Naive thymus-derived CD4-positive, alpha-beta T cell (primary cell): ENCODE measurements at regions of chr15 and their contacts with region 1.

Region 1: GRCh38 chr15:74433592-74434262 is at the start of gene SEMA7A:
- DNase-seq: peak; percentile 32 to 90 (median 53)
- ATAC-seq: peak; percentile 87
- H3K4me3 ChIP-seq: peak within 1 kb of the TSS; percentile 50
- H3K4me3 Mint-ChIP-seq: peak within 1 kb of the TSS; percentile 72 to 88 (median 78)
- H3K27ac ChIP-seq: no peak within 1 kb of the TSS
- H3K27ac Mint-ChIP-seq: peak within 1 kb of the TSS in 4 of 9 donors; percentile 65 to 89 (median 72)
- H3K4me1 ChIP-seq: peaks cover 6 to 35% of the 10 kb centered on the region in 2 donors
- H3K4me1 Mint-ChIP-seq: peaks cover 7 to 57% (median 16%) of the 10 kb centered on the region in 7 donors
- H3K27me3 ChIP-seq: no peaks in the 10 kb centered on the region
- H3K27me3 Mint-ChIP-seq: peaks cover 0 to 3% (median 0%) of the 10 kb centered on the region in 5 donors
- total RNA-seq, gene SEMA7A: 1.6 to 15.7 (median 5.0) TPM

Region 2: GRCh38 chr15:74418575-74419496 is 14.9 kb before region 1 on chr15:
- CTCF ChIA-PET with region 1: no interaction called
- POLR2A ChIA-PET with region 1: no interaction called
- intact Hi-C with region 1: loop called in 1 of 2 experiments (anchors 2 kb)
- DNase-seq: no peak
- ATAC-seq: no peak
- H3K4me3 ChIP-seq: no peak overlapping the region
- H3K4me3 Mint-ChIP-seq: no peak overlapping the region
- H3K27ac ChIP-seq: no peak overlapping the region
- H3K27ac Mint-ChIP-seq: peak overlapping the region in 1 of 9 donors; percentile 29
- H3K4me1 ChIP-seq: peaks cover 0 to 25% of the 10 kb centered on the region in 2 donors
- H3K4me1 Mint-ChIP-seq: peaks cover 0 to 47% (median 4%) of the 10 kb centered on the region in 7 donors
- H3K27me3 ChIP-seq: no peaks in the 10 kb centered on the region
- H3K27me3 Mint-ChIP-seq: no peaks in the 10 kb centered on the region

Region 3: DNA sequence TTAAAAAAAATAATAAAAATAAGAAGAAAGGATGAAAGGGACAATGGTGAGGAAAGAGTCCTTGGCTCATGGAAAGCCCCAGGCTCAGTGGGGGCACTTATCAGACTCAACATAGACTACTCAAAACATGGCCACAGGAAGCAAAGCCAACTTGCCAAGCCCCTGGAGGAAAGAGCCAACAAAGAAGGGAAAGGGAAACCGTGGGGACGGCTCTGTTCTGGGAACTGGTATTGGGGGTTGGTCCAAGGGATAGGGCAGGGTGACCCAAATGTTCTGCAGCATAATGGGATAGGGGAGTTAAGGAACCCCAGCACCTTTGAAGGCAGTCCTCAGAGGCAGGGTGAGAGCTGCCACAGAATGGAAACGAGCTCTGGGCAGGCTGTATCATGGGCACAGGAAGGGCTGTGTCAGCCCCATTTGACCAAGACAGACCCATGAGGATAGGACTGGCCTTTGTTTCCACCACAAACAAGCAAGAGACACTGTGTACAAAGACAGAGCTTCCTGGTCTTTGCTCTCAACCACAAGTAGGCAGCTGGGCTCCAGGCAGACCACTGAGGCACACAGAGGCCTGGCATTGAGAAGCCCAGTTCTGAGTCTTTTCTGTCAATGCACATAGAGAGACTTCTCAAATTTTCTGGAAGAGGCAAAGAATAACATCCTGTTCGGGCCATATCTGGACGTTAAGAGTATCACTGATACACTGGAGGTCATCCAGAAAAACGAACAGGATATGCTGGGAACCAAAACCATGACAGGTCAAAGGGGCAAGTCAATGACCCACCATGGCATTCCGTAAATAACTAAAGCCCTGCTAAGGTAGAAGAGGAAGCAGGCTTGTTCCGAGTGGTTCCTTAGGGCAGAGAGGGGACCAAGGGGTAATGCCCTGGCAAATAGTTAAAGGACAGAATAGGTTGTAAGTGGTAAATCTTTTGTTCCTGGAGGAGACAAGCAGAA is 10.7 kb after region 1 on chr15:
- CTCF ChIA-PET with region 1: no interaction called
- POLR2A ChIA-PET with region 1: no interaction called
- intact Hi-C with region 1: no loop called
- DNase-seq: no peak
- ATAC-seq: no peak
- H3K4me3 ChIP-seq: no peak overlapping the region
- H3K4me3 Mint-ChIP-seq: no peak overlapping the region
- H3K27ac ChIP-seq: no peak overlapping the region
- H3K27ac Mint-ChIP-seq: peak overlapping the region in 1 of 9 donors; percentile 8
- H3K4me1 ChIP-seq: no peaks in the 10 kb centered on the region
- H3K4me1 Mint-ChIP-seq: peaks cover 0 to 8% (median 0%) of the 10 kb centered on the region in 7 donors
- H3K27me3 ChIP-seq: no peaks in the 10 kb centered on the region
- H3K27me3 Mint-ChIP-seq: no peaks in the 10 kb centered on the region

Region 4: DNA sequence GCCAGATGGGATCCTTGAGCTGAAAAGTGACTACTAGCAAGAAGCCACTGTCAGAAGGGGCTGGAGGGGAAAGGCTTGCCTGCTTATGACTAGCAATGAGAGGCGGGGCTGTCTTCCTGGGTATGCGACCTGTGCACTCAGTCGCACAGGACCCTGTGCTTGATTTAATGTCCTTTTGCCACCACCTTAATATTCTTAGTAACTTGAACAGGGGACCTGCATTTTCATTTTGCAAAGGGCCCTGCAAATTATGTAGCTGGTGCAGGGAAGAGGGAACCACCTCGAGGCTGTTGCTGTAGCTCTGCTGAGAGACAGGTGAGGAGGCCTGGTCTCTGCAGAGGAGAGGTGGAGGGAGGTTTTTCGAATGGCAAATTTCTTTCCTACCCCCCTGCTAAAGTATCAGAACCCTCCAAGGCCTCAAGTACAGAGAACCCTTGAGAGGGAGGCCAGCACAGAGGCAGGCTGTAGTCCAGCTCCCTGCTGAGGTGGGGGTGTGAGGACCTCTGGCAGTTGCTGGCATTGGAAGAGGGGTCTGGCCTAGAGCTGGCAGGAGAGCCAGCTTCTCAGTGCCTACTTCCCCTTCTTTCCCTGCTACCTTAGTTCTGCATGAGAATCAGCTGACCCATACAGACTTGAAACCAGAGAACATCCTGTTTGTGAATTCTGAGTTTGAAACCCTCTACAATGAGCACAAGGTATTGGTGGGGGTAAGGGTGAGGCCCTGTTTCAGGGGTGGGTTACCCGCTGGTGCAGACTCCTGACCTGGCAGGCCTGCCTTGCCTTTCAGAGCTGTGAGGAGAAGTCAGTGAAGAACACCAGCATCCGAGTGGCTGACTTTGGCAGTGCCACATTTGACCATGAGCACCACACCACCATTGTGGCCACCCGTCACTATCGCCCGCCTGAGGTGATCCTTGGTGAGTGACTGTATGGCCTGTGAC is 193.3 kb after region 1 on chr15:
- CTCF ChIA-PET with region 1: no interaction called
- POLR2A ChIA-PET with region 1: no interaction called
- intact Hi-C with region 1: no loop called
- DNase-seq: no peak
- ATAC-seq: peak; percentile 31
- H3K4me3 ChIP-seq: no peak overlapping the region
- H3K4me3 Mint-ChIP-seq: peak overlapping the region in 1 of 10 donors; percentile 56
- H3K27ac ChIP-seq: no peak overlapping the region
- H3K27ac Mint-ChIP-seq: peak overlapping the region in 7 of 9 donors; percentile 8 to 79 (median 63)
- H3K4me1 ChIP-seq: no peaks in the 10 kb centered on the region
- H3K4me1 Mint-ChIP-seq: peaks cover under 1 to 19% (median 12%) of the 10 kb centered on the region in 7 donors
- H3K27me3 ChIP-seq: no peaks in the 10 kb centered on the region
- H3K27me3 Mint-ChIP-seq: no peaks in the 10 kb centered on the region